ENCODE measurements at regions of chr7 and their contacts with region 1.

Region 1: DNA sequence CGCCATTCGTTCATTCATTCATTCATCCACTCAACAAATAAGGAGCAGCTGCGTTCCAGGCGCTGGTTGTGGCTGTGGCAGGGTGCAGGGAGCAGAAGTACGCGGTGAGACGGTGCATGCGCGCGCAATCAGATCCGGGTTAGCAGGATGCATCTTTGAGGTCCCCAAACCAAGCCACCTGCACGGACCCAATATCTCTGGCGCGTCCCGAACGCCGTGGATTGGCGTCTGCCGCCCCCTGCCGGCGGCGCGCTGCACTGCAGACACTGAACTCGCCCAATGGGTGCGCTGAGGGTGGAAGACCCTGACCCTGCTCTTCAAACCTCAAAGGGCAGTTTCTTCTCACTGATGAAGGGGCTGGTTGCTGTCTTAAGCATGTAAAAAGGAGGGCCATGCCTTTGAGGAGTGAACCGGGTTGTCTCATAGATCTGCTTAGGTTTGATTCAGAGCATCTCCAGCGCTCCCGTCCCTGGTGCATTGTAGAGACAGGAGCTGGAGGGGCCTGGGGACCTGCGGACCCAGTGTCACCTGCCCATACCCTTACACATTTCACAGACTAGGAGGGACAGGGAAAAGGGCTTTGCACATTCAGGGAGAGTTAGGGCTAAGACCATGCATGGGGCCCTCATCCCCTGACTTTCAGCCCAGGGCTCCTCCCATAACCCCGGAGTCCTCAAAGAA is 102.5 kb downstream of the RAMP3 start:
- DNase-seq: peak in 1 of 2 donors; percentile 58
- H3K4me3 ChIP-seq: no peak overlapping the region
- H3K27ac ChIP-seq: no peak overlapping the region
- H3K4me1 ChIP-seq: no peaks in the 10 kb centered on the region
- H3K27me3 ChIP-seq: peaks cover 0 to 13% of the 10 kb centered on the region in 2 donors
- CTCF ChIP-seq: peak; percentile 73 to 85 (median 84)
- POLR2A ChIP-seq: no peak

Region 2: DNA sequence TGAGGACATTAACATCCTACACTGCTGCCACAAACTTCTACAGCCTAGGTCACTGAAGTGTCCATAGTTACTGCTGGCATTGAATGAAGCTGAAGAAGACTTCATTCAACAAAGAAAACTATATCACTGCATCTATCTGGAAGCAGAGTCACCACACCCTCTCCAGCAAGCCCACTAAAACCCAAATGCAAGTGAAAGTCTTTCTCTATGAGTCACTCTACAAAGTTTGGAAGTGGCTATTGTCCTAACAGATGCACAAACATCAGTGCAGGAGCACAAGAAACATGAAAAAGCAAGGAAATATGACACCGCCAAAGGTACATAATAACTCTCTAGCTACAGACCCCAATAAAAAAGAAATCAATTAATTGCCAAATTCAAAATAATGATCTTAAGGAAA is 891.2 kb before region 1 on chr7:
- intact Hi-C with region 1: loop called (anchors 5 kb)
- DNase-seq: no peak
- H3K4me3 ChIP-seq: no peak overlapping the region
- H3K27ac ChIP-seq: no peak overlapping the region
- H3K4me1 ChIP-seq: no peaks in the 10 kb centered on the region
- H3K27me3 ChIP-seq: no peaks in the 10 kb centered on the region
- CTCF ChIP-seq: no peak
- POLR2A ChIP-seq: no peak

Region 3: DNA sequence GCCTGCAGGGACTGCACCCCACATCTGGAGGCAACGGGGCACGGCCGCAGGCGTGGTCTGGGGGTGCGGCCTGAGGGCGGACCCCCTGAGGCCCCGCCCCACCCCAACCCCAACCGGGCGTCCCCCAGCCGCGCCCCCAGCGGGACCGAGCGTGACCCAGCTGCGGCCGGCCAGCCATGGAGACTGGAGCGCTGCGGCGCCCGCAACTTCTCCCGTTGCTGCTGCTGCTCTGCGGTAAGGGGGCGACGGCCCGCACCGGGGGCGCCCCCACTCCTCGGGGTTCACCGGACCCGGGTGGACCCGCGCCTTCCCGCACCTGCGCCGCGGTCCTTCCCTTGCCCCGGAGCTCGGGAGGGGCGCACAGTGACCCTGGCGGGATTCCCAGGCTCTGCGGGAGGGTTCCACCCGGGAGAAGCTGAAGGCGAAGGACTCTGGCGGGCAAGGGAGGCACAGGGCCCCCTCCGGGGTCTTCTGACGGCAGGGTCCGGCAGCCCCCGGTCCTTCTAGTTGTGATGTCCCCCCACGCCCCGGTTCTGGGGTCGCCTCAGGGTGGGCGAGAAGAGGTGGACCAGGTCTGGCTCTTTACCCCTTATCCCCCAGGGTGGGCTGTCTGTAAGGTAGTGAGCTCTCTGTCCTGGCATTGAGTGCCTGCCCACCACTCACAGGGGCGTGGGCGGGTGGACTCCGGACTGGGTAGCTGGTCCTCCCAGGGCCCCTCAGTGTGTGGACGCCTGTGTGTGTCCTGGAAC is 102.3 kb before region 1 on chr7 and contains the start of gene RAMP3:
- intact Hi-C with region 1: loop called (anchors 10 kb)
- DNase-seq: no peak
- H3K4me3 ChIP-seq: peak within 1 kb of the TSS; percentile 50 to 71 (median 50)
- H3K27ac ChIP-seq: peak within 1 kb of the TSS in 1 of 2 donors; percentile 63
- H3K4me1 ChIP-seq: no peaks in the 10 kb centered on the region
- H3K27me3 ChIP-seq: peaks cover 3 to 6% of the 10 kb centered on the region in 2 donors
- CTCF ChIP-seq: no peak
- POLR2A ChIP-seq: no peak
- total RNA-seq, gene RAMP3: 11.7 to 103 (median 76.8) TPM

Region 4: GRCh38 chr7:45178241-45179225 is 81.6 kb before region 1 on chr7:
- intact Hi-C with region 1: no loop called
- DNase-seq: peak in 1 of 2 donors; percentile 10
- H3K4me3 ChIP-seq: no peak overlapping the region
- H3K27ac ChIP-seq: no peak overlapping the region
- H3K4me1 ChIP-seq: no peaks in the 10 kb centered on the region
- H3K27me3 ChIP-seq: peaks cover 0 to 4% of the 10 kb centered on the region in 2 donors
- CTCF ChIP-seq: no peak
- POLR2A ChIP-seq: no peak

Measured in breast epithelium (tissue), 4 donors.